ENCODE measurements at regions of chr5 and their contacts with region 1.

Region 1: DNA sequence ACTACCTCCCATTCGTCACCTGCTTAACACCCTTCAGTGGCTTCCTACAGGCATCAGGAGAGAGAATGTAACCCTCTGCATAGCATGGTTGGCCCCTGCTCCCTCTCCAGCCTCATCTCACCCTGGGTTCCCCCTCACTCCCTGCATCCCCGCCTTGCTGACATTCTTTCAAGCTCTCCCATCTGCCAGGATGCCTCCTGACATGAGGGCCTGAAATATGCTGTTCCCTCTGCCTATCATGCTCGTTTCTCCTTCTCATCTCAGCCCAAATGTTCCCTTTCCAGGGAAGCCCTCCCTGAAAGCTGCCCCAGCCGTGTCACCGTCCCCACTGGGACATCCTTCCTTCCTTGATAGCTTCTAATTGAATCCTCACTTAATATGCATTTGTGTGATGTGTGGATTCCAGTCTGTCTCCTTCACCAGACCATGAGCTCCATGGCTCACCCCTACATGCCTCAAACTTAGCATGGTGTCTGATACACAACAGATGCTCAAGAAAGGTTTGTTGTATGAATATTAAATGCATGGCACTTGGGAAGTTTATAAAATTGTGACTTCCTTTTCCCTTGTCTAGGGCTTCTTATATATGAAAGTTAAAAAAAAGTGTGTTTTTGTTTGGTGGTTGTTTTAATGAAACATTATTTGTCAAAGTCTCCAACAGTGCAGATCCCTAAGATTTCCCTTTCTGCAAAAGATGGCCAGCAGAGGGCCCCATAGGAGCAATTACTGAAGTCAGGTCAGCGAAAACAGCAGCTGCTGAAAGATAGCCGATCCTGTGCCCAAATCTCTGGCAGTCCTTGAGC is 7.3 kb upstream of the C5orf58 start:
- DNase-seq: peak; percentile 70 to 82 (median 71)
- ATAC-seq: peak in 3 of 4 donors; percentile 73 to 82 (median 80)
- H3K4me3 ChIP-seq: no peak overlapping the region
- H3K27ac ChIP-seq: no peak overlapping the region
- H3K4me1 ChIP-seq: peaks cover 0 to 34% (median 0%) of the 10 kb centered on the region in 12 donors
- H3K27me3 ChIP-seq: no peaks in the 10 kb centered on the region
- CTCF ChIP-seq: peak; percentile 63 to 86 (median 78)
- POLR2A ChIP-seq: no peak

Region 2: GRCh38 chr5:170348137-170348633 is 122.7 kb after region 1 on chr5:
- intact Hi-C with region 1: loop called in 3 of 10 experiments (anchors 5 kb)
- DNase-seq: no peak
- ATAC-seq: peak in 3 of 4 donors; percentile 23 to 36 (median 31)
- H3K4me3 ChIP-seq: peak overlapping the region in 1 of 12 donors; percentile 12
- H3K27ac ChIP-seq: peak overlapping the region in 4 of 12 donors; percentile 8 to 43 (median 28)
- H3K4me1 ChIP-seq: peaks cover 0 to 23% (median 6%) of the 10 kb centered on the region in 12 donors
- H3K27me3 ChIP-seq: peaks cover 0 to 23% (median 4%) of the 10 kb centered on the region in 9 donors
- CTCF ChIP-seq: peak in 9 of 12 donors; percentile 5 to 53 (median 37)
- POLR2A ChIP-seq: no peak

Region 3: GRCh38 chr5:170420780-170421412 is 195.4 kb after region 1 on chr5:
- intact Hi-C with region 1: loop called (anchors 1 to 5 kb)
- DNase-seq: peak in 4 of 5 donors; percentile 55 to 63 (median 59)
- ATAC-seq: peak in 3 of 4 donors; percentile 67 to 83 (median 76)
- H3K4me3 ChIP-seq: no peak overlapping the region
- H3K27ac ChIP-seq: peak overlapping the region in 1 of 12 donors; percentile 14
- H3K4me1 ChIP-seq: peaks cover 0 to 34% (median 2%) of the 10 kb centered on the region in 12 donors
- H3K27me3 ChIP-seq: no peaks in the 10 kb centered on the region
- CTCF ChIP-seq: peak; percentile 63 to 86 (median 78)
- POLR2A ChIP-seq: no peak

Region 4: DNA sequence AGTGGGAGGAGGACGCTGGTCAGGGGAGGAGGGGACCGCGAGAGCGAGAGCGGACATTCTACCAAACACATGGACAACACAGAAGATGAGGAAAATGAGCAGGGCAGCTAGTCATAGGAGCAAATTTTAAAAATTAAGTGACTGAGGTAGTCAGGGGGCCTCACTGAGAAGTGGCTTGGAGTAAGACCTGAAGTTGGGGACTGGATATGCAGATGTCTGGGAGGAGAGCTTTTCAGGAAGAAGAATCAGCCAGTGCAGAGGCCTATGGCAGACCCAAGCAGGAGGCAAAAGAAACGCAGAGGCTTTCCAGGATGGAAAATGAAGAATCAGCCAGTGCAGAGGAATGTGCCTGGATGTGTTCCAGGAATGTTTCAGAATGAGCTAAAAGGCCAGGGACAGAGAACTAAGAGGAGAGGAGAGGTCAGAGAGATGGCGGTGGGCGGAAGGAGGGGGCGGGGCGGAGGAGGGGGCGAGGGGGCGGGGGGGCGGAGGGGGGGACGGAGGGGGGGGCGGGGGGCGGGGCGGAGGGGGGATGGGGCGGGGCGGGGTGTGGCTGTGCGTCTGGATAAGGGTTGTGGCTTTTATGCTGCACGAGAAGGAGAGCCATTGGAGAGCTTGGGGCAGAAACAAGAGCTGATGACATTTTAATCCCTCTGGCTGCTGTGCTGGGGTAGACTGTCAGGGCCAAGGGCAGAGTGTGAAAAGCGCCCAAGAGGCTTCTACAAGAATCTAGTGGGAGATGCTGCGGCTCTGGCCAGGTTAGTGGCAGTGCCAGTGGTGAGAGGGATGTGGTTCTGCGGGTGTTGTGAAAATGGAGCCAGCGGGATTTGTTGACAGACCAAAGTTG is 407.9 kb after region 1 on chr5:
- intact Hi-C with region 1: loop called in 5 of 10 experiments (anchors 5 to 10 kb)
- DNase-seq: peak in 4 of 5 donors; percentile 44 to 78 (median 62)
- ATAC-seq: peak; percentile 62 to 79 (median 69)
- H3K4me3 ChIP-seq: peak overlapping the region in 11 of 12 donors; percentile 11 to 55 (median 39)
- H3K27ac ChIP-seq: peak overlapping the region; percentile 30 to 93 (median 79)
- H3K4me1 ChIP-seq: peaks cover 0 to 39% (median 20%) of the 10 kb centered on the region in 12 donors
- H3K27me3 ChIP-seq: no peaks in the 10 kb centered on the region
- CTCF ChIP-seq: peak in 3 of 12 donors; percentile 5 to 33 (median 30)
- POLR2A ChIP-seq: no peak

Measured in heart left ventricle (tissue), 16 donors.